Panc1 (cell line): ENCODE measurements at regions of chr7 and their contacts with region 1.

Region 1: DNA sequence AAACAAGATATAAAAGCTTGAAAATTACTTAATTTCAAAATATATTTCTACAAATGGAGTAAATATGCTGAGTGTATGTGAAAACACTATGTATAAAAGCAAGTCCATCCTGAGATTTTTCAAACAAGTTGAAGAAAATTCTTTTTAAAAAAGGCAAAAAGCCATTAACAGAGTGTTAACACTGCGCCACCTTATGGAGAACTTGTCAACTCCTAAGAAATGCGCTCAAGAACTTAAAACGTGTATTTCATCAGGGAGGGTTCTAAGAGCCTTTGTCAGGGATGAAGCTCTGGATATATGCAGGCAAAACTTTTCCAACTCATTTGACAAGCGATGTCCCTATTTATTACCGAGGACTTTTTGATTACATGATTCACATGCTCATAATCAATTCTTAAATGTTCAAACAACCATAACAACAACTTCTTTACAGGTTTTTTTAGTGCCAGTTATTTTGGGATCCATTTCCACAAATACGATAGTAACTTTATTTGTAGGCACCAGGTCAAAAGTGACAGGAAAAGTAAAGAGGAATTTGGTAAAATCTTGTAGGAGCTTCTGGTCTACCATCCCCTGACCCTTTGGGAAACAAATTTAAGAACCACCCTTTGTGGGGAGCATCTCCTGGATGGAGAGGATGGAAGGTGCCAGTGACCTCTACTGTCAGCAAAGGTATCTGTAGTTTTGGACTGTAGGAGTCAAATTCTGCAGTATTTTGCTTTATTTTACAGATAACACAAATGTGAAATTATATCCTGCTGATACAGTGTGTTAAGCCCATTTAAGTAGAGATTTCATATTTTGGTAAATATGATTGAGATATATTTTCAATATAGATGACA is 23.2 kb downstream of the CALCR start:
- DNase-seq: peak; percentile 20
- ATAC-seq: peak; percentile 75
- H3K4me3 ChIP-seq: no peak overlapping the region
- H3K27ac ChIP-seq: no peak overlapping the region
- H3K4me1 ChIP-seq: no peaks in the 10 kb centered on the region
- H3K27me3 ChIP-seq: no peaks in the 10 kb centered on the region; the same call in 1 of the 2 replicates
- CTCF ChIP-seq: peak; percentile 62; the same call in 1 of the 2 replicates

Region 2: GRCh38 chr7:92057362-92057761 is 1493.9 kb before region 1 on chr7:
- CTCF ChIA-PET with region 1: no interaction called
- POLR2A ChIA-PET with region 1: no interaction called
- in situ Hi-C with region 1: no loop called
- intact Hi-C with region 1: no loop called
- DNase-seq: no peak
- ATAC-seq: no peak
- H3K4me3 ChIP-seq: no peak overlapping the region
- H3K27ac ChIP-seq: no peak overlapping the region
- H3K4me1 ChIP-seq: no peaks in the 10 kb centered on the region
- H3K27me3 ChIP-seq: no peaks in the 10 kb centered on the region
- CTCF ChIP-seq: no peak

Region 3: DNA sequence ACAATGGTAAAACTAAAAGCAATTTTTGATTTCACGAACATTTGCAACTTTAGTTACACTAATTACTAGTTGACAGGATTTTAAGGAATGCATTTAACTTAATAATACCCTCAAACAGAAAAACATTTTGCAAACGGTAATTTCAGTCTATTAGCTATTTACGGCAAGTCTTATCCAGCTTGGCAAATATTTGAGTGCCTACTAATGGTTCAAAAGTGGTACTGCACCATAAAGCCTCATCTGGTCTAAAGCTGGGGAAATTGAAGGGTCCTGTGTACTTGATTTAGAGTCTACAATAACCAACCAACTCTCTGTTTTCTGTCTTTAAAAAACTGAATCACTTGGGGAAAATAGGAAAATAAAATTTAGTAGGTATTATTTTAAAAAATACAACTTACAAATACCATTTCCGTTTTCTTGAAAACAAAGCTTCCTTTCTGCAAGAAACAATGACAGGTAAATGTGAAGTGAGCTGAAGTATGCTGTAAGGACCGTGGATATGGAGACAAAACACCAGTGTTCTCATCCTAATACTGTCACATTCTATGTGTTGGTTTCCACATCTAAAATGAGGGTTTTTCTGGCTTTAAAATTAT is 176.8 kb before region 1 on chr7:
- CTCF ChIA-PET with region 1: no interaction called
- POLR2A ChIA-PET with region 1: no interaction called
- in situ Hi-C with region 1: no loop called
- intact Hi-C with region 1: loop called (anchors 5 kb)
- DNase-seq: peak; percentile 42
- ATAC-seq: no peak
- H3K4me3 ChIP-seq: no peak overlapping the region
- H3K27ac ChIP-seq: no peak overlapping the region
- H3K4me1 ChIP-seq: no peaks in the 10 kb centered on the region
- H3K27me3 ChIP-seq: peaks cover 4% of the 10 kb centered on the region; the same call in 1 of the 2 replicates
- CTCF ChIP-seq: peak; percentile 83; the same call in 1 of the 2 replicates